Common myeloid progenitor, CD34-positive (primary cell): ENCODE measurements at regions of chr13 and their contacts with region 1.

Region 1: DNA sequence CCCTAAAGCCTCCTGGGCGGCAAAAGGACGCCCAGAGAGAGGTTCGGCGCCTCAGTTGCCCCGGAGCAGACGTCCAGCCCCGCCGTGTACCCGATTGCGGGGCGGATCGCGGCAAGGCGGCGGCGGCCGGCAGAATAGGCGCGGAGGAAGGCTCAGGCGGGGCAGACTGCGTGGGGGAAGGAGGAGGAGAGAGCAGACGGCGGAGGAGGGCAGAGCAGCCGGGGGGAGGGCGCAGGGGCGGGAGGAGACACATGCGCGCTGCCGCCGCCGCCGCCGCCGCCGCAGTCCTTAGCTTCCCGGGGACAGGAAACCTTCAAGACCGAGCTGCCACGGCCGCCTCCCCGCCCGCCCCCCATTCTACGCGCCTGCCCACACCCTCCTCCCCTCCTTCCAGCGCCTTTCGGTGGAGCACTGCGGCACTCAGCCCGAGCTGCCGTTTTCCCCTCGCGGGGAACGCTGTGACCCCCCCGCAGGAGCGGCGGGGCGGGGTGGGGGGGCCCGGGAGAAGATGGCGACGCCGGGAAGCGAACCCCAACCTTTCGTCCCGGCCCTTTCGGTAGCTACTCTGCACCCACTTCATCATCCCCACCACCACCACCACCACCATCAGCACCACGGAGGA is at the start of gene LRCH1:
- DNase-seq: peak; percentile 86 to 96 (median 89)
- H3K4me3 ChIP-seq: peak within 1 kb of the TSS; percentile 81 to 95 (median 94)
- H3K27ac ChIP-seq: peak within 1 kb of the TSS; percentile 78 to 88
- H3K4me1 ChIP-seq: peaks cover 21 to 51% (median 36%) of the 10 kb centered on the region in 4 experiments
- H3K27me3 ChIP-seq: no peaks in the 10 kb centered on the region

Region 2: GRCh38 chr13:46580362-46580839 is 27.4 kb after region 1 on chr13:
- CTCF ChIA-PET with region 1: interaction called, 10 read pairs
- POLR2A ChIA-PET with region 1: no interaction called
- DNase-seq: peak in 2 of 3 donors; percentile 41 to 46
- H3K4me3 ChIP-seq: no peak overlapping the region
- H3K27ac ChIP-seq: no peak overlapping the region
- H3K4me1 ChIP-seq: peaks cover 0 to 24% (median 11%) of the 10 kb centered on the region in 4 experiments
- H3K27me3 ChIP-seq: no peaks in the 10 kb centered on the region

Region 3: GRCh38 chr13:46613409-46614049 is 60.5 kb after region 1 on chr13:
- CTCF ChIA-PET with region 1: interaction called, 11 read pairs
- POLR2A ChIA-PET with region 1: no interaction called
- DNase-seq: no peak
- H3K4me3 ChIP-seq: no peak overlapping the region
- H3K27ac ChIP-seq: no peak overlapping the region
- H3K4me1 ChIP-seq: peaks cover 7 to 41% (median 27%) of the 10 kb centered on the region in 4 experiments
- H3K27me3 ChIP-seq: no peaks in the 10 kb centered on the region

Region 4: DNA sequence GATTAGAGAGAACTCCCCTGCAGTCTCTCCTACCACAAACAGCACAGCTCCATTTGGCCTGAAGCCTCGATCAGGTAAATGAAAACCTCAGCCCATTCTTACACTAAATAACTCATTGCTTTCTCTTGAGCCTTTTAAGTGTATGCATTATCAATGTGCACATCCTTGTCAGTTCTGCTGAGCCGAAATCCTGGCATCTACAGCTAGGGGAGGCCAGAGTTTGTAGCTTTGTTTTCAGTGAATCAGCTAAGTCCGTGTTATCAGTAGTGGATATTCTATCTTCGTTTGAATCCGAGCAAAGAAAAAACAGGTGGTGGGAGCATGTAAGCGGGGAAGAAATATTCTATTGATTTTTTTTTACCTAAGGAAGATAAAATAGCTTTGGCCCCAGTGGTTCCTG is 159.5 kb after region 1 on chr13:
- CTCF ChIA-PET with region 1: interaction called, 26 read pairs
- POLR2A ChIA-PET with region 1: interaction called, 3 read pairs
- DNase-seq: peak in 1 of 3 donors; percentile 10
- H3K4me3 ChIP-seq: no peak overlapping the region
- H3K27ac ChIP-seq: no peak overlapping the region
- H3K4me1 ChIP-seq: peaks cover 4 to 27% (median 7%) of the 10 kb centered on the region in 4 experiments
- H3K27me3 ChIP-seq: no peaks in the 10 kb centered on the region